Caco-2 (cell line): ENCODE measurements at regions of chr3 and their contacts with region 1.

Region 1: DNA sequence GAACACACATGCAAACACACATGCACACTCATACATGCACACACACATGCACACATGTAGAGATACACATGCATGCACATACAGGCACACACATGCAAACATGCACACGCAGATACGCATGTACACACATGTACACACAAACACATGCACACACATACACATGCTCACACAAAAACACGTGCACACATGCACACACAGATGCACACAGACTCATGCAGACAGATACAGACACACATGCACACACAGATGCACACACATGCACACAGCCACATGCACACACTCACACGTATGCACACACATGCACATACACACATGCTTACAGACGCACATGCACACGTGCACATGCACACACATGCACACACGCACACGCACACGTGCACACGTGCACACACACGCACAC is 37.3 kb upstream of the ALG1L2 start:
- DNase-seq: no peak
- H3K4me3 ChIP-seq: no peak overlapping the region
- H3K4me3 Mint-ChIP-seq: no peak overlapping the region
- H3K27ac Mint-ChIP-seq: no peak overlapping the region
- H3K4me1 ChIP-seq: no peaks in the 10 kb centered on the region
- H3K4me1 Mint-ChIP-seq: no peaks in the 10 kb centered on the region
- H3K27me3 ChIP-seq: no peaks in the 10 kb centered on the region
- H3K27me3 Mint-ChIP-seq: no peaks in the 10 kb centered on the region
- CTCF ChIP-seq: no peak

Region 2: DNA sequence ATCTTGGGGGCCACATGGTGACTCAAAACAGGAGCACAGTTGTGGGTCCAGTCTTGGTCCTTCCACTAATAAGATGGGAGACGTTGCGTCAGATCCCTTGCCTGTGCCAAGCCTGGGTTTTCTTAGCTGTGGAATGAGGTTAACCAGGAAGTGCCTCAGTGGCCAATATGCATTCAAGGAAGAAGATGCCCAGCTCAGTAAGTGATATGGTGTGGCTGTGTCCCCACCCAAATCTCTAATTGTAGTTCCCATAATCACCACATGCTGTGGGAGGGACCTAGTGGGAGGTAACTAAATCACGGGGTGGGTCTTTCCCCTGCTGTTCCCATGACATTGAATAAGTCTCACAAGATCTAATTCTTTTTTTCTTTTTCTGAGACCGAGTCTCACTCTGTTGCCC is 43.7 kb after region 1 on chr3:
- CTCF ChIA-PET with region 1: no interaction called
- POLR2A ChIA-PET with region 1: no interaction called
- intact Hi-C with region 1: loop called (anchors 2 kb)
- DNase-seq: no peak
- H3K4me3 ChIP-seq: no peak overlapping the region
- H3K4me3 Mint-ChIP-seq: no peak overlapping the region
- H3K27ac Mint-ChIP-seq: no peak overlapping the region
- H3K4me1 ChIP-seq: no peaks in the 10 kb centered on the region
- H3K4me1 Mint-ChIP-seq: peaks cover 7% of the 10 kb centered on the region
- H3K27me3 ChIP-seq: no peaks in the 10 kb centered on the region
- H3K27me3 Mint-ChIP-seq: no peaks in the 10 kb centered on the region
- CTCF ChIP-seq: no peak

Region 3: DNA sequence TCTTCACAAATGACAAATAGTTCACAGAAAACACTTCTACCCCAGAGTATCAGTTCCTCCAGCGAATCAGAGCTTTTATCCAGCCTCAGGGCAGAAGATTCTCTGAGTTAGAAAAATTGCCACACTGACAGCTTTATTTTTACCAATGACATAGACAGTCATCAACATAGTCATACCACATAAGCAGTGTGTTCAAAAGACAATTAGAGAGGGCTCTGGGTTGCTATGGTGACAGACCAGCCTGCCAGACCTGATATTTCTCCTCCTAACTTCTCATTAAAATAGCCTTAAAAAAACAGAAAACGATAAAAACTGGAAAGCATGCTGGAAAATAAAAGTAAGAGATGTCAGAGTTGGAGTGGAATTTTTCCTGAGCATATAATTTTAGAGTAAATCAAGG is 255.2 kb after region 1 on chr3:
- CTCF ChIA-PET with region 1: no interaction called
- POLR2A ChIA-PET with region 1: no interaction called
- intact Hi-C with region 1: no loop called
- DNase-seq: no peak
- H3K4me3 ChIP-seq: no peak overlapping the region
- H3K4me3 Mint-ChIP-seq: no peak overlapping the region
- H3K27ac Mint-ChIP-seq: no peak overlapping the region
- H3K4me1 ChIP-seq: no peaks in the 10 kb centered on the region
- H3K4me1 Mint-ChIP-seq: no peaks in the 10 kb centered on the region
- H3K27me3 ChIP-seq: no peaks in the 10 kb centered on the region; the same call in none of the 2 replicates
- H3K27me3 Mint-ChIP-seq: peaks cover 8% of the 10 kb centered on the region
- CTCF ChIP-seq: no peak